ENCODE measurements at regions of chr11 and their contacts with region 1.

Region 1: GRCh38 chr11:15819679-15820286 is 536.6 kb downstream of the SOX6 start:
- DNase-seq: peak; percentile 9
- H3K4me3 Mint-ChIP-seq: no peak overlapping the region
- H3K27ac Mint-ChIP-seq: peak overlapping the region; percentile 3
- H3K4me1 Mint-ChIP-seq: peaks cover 15% of the 10 kb centered on the region
- H3K27me3 Mint-ChIP-seq: no peaks in the 10 kb centered on the region

Region 2: DNA sequence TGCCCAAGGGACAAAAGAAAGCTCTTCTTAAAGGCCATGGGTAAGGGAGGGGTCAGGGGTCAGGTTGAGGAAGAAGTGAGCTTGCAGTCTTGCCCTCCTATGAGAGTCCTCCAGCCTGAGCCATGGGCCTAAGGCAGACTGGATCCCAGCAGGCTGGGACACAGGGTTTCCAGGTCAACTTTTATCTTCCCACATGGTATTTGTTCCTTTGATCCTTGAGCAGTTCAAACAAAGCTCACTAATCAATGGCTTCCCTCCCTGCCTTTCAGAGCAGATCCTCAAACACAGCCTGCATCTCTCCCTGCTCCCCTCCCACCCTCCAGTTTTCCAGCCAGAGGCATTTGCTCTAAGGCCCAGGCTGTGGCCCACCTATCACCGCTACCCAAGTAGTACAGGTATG is 115.7 kb before region 1 on chr11:
- intact Hi-C with region 1: no loop called
- DNase-seq: no peak
- H3K4me3 Mint-ChIP-seq: no peak overlapping the region
- H3K27ac Mint-ChIP-seq: no peak overlapping the region
- H3K4me1 Mint-ChIP-seq: no peaks in the 10 kb centered on the region
- H3K27me3 Mint-ChIP-seq: no peaks in the 10 kb centered on the region

Region 3: GRCh38 chr11:15800111-15800800 is 19.5 kb before region 1 on chr11:
- intact Hi-C with region 1: loop called (anchors 2 kb)
- DNase-seq: no peak
- H3K4me3 Mint-ChIP-seq: no peak overlapping the region
- H3K27ac Mint-ChIP-seq: peak overlapping the region; percentile 48
- H3K4me1 Mint-ChIP-seq: peaks cover 7% of the 10 kb centered on the region
- H3K27me3 Mint-ChIP-seq: no peaks in the 10 kb centered on the region

Region 4: DNA sequence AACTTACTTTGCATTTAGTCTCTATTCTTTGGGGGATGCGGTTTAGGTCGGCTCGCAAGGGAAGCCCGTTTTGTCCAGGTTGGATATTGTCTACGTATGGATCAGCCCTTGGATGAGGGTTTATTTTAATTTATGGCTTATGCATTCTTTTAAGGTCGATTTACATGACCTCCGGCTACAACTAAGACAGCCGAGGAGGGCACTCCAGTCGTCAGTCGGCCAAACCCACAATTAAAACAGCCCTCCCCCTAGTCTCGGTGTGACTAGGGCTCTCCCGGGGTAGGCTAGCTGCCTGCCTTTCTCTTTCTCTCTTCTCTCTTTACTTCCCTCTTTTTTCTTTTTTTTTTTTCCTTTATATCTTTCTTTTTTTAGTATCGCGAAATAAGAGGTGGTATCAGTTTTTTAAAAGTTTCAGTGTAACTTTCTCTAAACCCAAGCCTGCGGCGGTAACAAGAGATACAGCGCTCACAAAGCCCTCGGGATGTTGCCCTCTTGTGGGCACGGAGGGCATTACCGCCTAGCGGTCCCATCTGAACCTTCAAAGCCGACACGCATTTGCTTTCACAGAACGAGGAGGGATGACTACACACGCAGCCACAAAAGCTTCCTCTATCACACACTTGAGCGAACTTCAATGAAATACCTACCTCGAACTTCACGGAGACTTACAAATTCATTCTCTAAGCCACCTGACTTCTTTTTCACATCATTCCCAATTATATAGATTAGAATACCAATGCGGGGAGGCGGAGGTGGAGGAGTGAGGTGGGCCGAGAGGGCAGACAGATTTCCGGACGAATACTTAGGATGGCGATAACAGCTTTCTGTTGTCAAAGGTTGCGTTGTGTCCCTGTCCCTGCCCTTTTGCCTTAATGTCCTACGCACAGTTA is 786.4 kb after region 1 on chr11:
- intact Hi-C with region 1: loop called (anchors 2 kb)
- DNase-seq: peak; percentile 74
- H3K4me3 Mint-ChIP-seq: peak overlapping the region; percentile 83
- H3K27ac Mint-ChIP-seq: peak overlapping the region; percentile 51
- H3K4me1 Mint-ChIP-seq: peaks cover 8% of the 10 kb centered on the region
- H3K27me3 Mint-ChIP-seq: peaks cover 47% of the 10 kb centered on the region